ENCODE measurements at regions of chr14 and their contacts with region 1.

Region 1: GRCh38 chr14:80954687-80955299 is 628 bp upstream of the TSHR start:
- DNase-seq: no peak
- ATAC-seq: peak; percentile 46
- H3K4me3 ChIP-seq: no peak overlapping the region; the same call in 1 of the 2 replicates
- H3K27ac ChIP-seq: no peak overlapping the region
- H3K4me1 ChIP-seq: peaks cover 12% of the 10 kb centered on the region
- H3K27me3 ChIP-seq: peaks cover 0 to 5% of the 10 kb centered on the region in 2 experiments; a peak in 3 of 4 replicates
- CTCF ChIP-seq: peak; percentile 70 to 83 (median 71)
- EP300 ChIP-seq: no peak
- POLR2A ChIP-seq: no peak
- RAD21 ChIP-seq: peak; percentile 84

Region 2: DNA sequence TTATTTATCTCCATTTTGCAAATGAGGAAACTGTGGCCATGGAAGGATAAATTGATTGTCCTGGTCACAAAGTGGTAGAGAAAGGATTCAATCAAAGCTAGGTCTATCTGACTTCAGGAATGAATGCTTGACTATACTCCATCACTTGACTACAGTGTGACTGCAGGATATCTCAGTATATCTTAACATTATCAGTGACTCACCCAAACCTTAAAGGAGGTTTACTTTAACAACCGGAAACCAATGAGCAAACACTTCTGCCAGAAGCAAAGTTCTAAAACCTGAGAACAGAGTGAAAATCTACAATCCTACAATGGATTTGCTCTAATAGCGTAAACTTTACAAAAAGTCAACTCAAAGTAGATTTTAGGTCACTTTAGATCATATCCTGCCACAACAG is 290.2 kb before region 1 on chr14:
- CTCF ChIA-PET with region 1: no interaction called
- POLR2A ChIA-PET with region 1: no interaction called
- RAD21 ChIA-PET with region 1: no interaction called
- SMC1A ChIA-PET with region 1: no interaction called
- in situ Hi-C with region 1: no loop called
- intact Hi-C with region 1: no loop called
- DNase-seq: no peak
- ATAC-seq: no peak
- H3K4me3 ChIP-seq: no peak overlapping the region
- H3K27ac ChIP-seq: no peak overlapping the region
- H3K4me1 ChIP-seq: no peaks in the 10 kb centered on the region
- H3K27me3 ChIP-seq: no peaks in the 10 kb centered on the region
- CTCF ChIP-seq: no peak
- EP300 ChIP-seq: no peak
- POLR2A ChIP-seq: no peak
- RAD21 ChIP-seq: no peak

Region 3: DNA sequence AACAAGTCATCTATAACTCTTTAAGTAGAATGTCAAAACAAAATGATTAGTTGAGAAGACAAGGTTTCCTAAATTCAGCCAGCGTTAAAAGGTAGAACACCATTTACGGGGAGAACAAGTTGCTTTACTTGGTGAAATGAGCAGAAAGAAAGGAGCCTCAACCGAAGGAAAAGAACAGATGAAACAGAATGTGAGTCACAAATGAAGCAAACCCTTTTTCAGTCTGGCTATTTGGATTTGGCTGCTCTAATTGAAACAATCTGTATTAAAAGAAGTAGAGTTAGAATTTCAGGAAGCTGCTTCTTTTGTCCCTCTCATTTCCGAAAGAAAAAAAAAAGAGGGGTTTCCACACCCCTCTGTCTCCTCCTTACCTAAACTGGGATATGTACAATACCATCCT is 47.8 kb before region 1 on chr14:
- CTCF ChIA-PET with region 1: no interaction called
- POLR2A ChIA-PET with region 1: no interaction called
- RAD21 ChIA-PET with region 1: no interaction called
- SMC1A ChIA-PET with region 1: no interaction called
- in situ Hi-C with region 1: no loop called
- intact Hi-C with region 1: no loop called
- DNase-seq: no peak
- ATAC-seq: no peak
- H3K4me3 ChIP-seq: no peak overlapping the region
- H3K27ac ChIP-seq: no peak overlapping the region
- H3K4me1 ChIP-seq: no peaks in the 10 kb centered on the region
- H3K27me3 ChIP-seq: no peaks in the 10 kb centered on the region
- CTCF ChIP-seq: no peak
- EP300 ChIP-seq: no peak
- POLR2A ChIP-seq: no peak
- RAD21 ChIP-seq: no peak

Region 4: GRCh38 chr14:81211844-81212243 is 257.1 kb after region 1 on chr14:
- CTCF ChIA-PET with region 1: interaction called, 7 read pairs
- POLR2A ChIA-PET with region 1: no interaction called
- RAD21 ChIA-PET with region 1: no interaction called
- SMC1A ChIA-PET with region 1: interaction called, 3 read pairs
- in situ Hi-C with region 1: no loop called
- intact Hi-C with region 1: loop called (anchors 1 kb)
- DNase-seq: no peak
- ATAC-seq: peak; percentile 79
- H3K4me3 ChIP-seq: no peak overlapping the region
- H3K27ac ChIP-seq: no peak overlapping the region
- H3K4me1 ChIP-seq: peaks cover 8% of the 10 kb centered on the region
- H3K27me3 ChIP-seq: no peaks in the 10 kb centered on the region
- CTCF ChIP-seq: peak; percentile 36 to 54 (median 41); a peak in 5 of 6 replicates
- EP300 ChIP-seq: no peak
- POLR2A ChIP-seq: no peak
- RAD21 ChIP-seq: peak; percentile 68

Measured in GM12878 (cell line).